Calu3 (cell line): ENCODE measurements at regions of chr17 and their contacts with region 1.

Region 1: GRCh38 chr17:7214300-7215135 is 5.1 kb downstream of the DLG4 start:
- DNase-seq: peak; percentile 98
- H3K4me3 Mint-ChIP-seq: peak overlapping the region; percentile 74
- H3K27ac Mint-ChIP-seq: peak overlapping the region; percentile 85
- H3K4me1 Mint-ChIP-seq: peaks cover 17% of the 10 kb centered on the region
- H3K27me3 Mint-ChIP-seq: peaks cover 63% of the 10 kb centered on the region
- CTCF ChIP-seq: peak; percentile 12

Region 2: DNA sequence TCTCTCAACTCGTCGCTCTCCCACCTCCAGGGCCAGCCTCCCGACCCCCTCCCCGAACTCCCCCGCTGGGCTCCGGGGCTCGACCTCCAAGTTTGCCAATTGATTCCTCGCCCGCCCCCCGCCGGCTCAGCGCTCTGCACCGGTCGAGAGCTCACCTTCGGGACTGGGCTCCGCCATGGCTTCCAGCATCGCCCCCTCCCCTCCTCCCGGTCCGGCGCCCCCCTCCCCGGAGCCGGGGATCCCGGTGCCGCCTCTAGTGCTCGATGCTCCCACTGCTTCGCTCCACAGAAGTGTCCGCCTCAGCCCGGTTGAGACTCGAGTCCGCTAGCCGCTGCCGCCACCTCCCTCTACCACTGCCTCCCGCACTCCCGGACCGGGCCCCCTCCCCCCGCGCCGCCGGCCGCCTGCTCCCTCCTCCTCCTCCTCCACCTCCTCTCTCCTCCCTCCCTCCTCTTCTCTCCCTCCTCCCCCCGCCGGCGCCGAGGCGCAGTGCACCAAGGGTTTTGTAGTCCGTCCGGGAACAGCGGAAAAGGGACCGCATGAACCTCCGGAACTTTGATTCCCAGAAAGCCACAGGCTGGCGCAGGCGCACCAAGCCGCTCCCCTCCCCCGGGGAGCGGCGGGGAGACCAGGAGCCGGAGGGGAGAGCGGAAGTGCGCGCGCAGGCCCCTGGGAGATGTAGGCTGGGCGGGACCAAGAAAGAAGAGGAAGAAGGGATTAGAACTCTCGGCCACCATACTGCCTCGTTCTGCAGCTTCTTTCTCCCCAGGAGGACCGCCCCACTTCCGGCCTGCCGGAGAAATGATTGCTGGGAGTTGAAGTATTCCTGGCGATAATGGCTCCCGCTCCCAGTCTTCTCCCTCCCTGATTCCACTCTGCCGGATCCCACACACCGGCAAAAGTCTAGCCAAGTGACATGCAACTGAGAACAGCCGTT is 24.8 kb after region 1 on chr17 and contains the start of gene PHF23:
- CTCF ChIA-PET with region 1: interaction called, 13 read pairs
- intact Hi-C with region 1: no loop called
- DNase-seq: peak; percentile 94
- H3K4me3 Mint-ChIP-seq: peak within 1 kb of the TSS; percentile 94
- H3K27ac Mint-ChIP-seq: peak within 1 kb of the TSS; percentile 83
- H3K4me1 Mint-ChIP-seq: peaks cover 53% of the 10 kb centered on the region
- H3K27me3 Mint-ChIP-seq: no peaks in the 10 kb centered on the region
- CTCF ChIP-seq: no peak
- total RNA-seq, gene PHF23: 30.2 and 31.6 TPM in 2 replicates

Region 3: GRCh38 chr17:7383742-7384488 is 169.4 kb after region 1 on chr17:
- CTCF ChIA-PET with region 1: no interaction called
- intact Hi-C with region 1: no loop called
- DNase-seq: no peak
- H3K4me3 Mint-ChIP-seq: no peak overlapping the region
- H3K27ac Mint-ChIP-seq: no peak overlapping the region
- H3K4me1 Mint-ChIP-seq: peaks cover 8% of the 10 kb centered on the region
- H3K27me3 Mint-ChIP-seq: no peaks in the 10 kb centered on the region
- CTCF ChIP-seq: no peak